ENCODE measurements at regions of chr1 and their contacts with region 1.

Region 1: DNA sequence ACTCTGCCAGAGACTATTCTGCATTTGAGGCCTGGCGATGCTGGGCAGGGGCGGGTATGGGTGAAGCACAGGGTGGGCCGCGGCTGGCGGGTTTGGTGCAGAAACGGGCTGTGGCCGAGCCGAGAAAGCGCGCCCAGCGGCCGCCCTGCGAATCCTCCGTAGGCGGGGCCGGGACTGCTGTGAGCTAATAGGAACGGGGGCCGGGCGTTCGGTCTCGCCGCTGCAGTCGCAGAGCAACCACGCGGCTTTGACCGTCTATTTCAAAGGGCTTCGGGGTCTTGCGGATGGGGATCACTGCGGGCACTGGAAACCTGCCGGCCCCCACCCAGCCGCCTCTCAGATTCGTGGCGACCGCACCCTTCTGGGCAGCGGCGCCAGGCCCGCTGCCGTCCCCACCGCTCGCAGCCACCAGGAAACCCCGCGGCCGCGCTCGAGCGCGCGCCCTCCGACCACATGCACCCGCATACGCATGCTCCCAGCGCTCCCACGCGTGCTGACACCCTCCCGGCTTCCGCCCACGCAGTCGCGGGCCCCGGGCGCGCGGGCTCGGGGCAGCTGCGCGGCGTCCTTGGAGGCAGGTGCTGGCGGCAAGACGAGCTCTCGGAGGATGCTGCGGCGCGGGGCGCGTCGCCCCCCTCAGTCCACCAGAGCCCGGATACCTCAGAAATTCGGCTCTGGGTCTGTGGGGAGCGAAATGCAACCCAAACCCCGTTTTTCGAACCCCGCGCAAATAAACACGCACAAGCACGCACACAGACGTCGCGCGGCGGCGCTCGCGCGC is 32.6 kb downstream of the DNTTIP2 start:
- DNase-seq: peak; percentile 74
- H3K4me3 ChIP-seq: peak overlapping the region; percentile 74 to 97 (median 87)
- H3K27ac ChIP-seq: peak overlapping the region; percentile 83
- H3K4me1 ChIP-seq: peaks cover 39% of the 10 kb centered on the region
- H3K27me3 ChIP-seq: no peaks in the 10 kb centered on the region
- CTCF ChIP-seq: peak in 1 of 2 donors; percentile 42

Region 2: DNA sequence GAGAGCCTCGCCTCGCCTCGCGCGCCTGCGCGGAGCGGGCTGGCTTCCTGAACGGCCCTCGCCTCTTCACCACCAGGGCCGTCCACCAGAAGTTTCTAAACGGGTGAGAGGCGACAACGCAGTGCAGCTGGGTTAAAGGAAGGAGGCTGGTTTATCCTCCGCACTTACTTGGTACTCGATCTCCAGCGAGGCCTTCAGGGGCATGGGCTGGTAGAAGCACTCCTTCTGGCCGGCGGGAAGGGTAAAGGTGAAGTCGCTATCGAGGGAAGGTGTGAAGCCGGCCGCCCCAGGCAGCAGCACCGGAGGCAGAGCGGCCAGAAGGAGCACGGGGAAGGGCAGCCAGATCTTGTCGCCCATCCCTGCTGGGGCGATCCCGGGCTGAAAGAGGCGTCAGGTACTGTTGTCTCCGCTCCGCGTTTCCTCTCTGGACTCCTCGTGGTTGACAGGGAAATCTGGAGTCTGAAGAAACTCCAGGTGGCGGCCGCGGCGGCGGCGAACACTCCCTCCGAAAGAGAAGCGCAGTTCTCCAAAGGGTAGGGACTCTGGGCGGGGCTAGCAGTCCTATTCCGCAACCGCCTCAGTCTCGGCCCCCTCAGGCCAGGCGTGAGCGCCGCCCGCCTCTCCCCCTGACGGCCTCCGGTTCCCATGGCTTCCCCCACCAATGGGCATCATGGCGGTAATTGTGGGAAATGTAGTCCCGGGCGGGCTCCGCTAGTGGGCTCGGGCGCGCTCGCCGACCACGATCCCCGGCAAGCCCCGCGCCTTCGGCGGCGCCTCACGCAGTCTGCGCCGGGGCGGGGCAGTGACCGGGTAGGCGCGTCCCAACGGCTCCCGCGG is 666.3 kb before region 1 on chr1 and contains the start of gene TMED5:
- CTCF ChIA-PET with region 1: no interaction called
- dilution Hi-C with region 1: no loop called
- in situ Hi-C with region 1: no loop called
- intact Hi-C with region 1: loop called (anchors 2 kb)
- DNase-seq: peak; percentile 99
- H3K4me3 ChIP-seq: peak within 1 kb of the TSS; percentile 85 to 100 (median 98)
- H3K27ac ChIP-seq: peak within 1 kb of the TSS; percentile 94
- H3K4me1 ChIP-seq: peaks cover 14% of the 10 kb centered on the region
- H3K27me3 ChIP-seq: no peaks in the 10 kb centered on the region
- CTCF ChIP-seq: peak in 1 of 2 donors; percentile 18
- total RNA-seq, gene TMED5: 50.5 to 61.5 TPM

Region 3: DNA sequence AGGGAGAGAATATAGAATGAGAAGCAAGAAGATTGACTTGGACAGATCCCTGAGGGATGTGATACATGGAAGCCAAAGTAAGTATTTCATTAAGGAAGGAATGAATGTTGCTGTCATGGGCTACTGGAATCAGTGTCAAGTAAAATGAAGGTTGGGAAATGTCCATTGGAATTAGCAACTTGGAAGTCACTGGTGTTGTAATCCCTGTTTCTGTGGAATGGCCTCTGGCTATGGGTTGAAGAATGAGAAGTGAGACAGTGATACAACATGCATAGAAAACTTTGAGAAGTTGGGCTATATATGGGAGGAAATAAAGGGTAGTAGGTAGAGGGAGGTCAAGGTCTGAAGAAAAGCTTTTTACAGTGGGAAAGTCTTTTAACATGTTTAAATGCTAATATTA is 611.1 kb before region 1 on chr1:
- CTCF ChIA-PET with region 1: no interaction called
- dilution Hi-C with region 1: no loop called
- in situ Hi-C with region 1: no loop called
- intact Hi-C with region 1: no loop called
- DNase-seq: no peak
- H3K4me3 ChIP-seq: no peak overlapping the region
- H3K27ac ChIP-seq: no peak overlapping the region
- H3K4me1 ChIP-seq: no peaks in the 10 kb centered on the region
- H3K27me3 ChIP-seq: no peaks in the 10 kb centered on the region
- CTCF ChIP-seq: no peak

Region 4: DNA sequence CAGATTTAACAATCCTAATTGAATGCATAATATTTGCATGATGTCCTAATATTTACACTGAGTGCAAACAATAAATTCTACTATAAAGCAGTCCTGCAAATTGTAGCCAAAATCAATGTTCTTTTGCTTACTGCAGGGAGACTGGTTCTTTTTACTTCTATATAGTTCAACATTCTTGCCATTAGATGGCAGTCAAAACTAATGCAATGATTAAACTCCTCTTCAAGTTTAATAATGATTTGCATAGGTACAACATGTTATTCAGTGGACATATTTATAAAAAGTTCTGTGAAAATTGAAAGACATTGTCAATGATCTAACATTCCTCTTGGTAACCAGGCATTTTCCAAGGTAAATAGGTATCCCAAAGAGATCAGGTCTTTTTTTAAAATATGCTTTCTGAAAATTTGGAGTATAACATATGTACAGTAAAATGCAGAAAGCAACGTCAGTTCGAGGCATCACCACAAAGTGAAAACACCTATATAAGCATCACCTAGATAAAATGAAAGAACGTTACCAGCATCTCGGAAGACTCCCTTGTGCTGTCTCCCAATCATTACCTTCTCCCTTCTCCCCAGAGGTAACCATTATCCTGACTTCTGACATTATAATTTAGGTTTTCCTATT is 408.3 kb before region 1 on chr1:
- CTCF ChIA-PET with region 1: interaction called, 3 read pairs
- dilution Hi-C with region 1: no loop called
- in situ Hi-C with region 1: loop called in 1 of 2 experiments (anchors 10 kb)
- intact Hi-C with region 1: loop called (anchors 1 kb)
- DNase-seq: peak; percentile 39
- H3K4me3 ChIP-seq: no peak overlapping the region
- H3K27ac ChIP-seq: no peak overlapping the region
- H3K4me1 ChIP-seq: peaks cover 5% of the 10 kb centered on the region
- H3K27me3 ChIP-seq: no peaks in the 10 kb centered on the region
- CTCF ChIP-seq: peak; percentile 52 to 63

Region 5: GRCh38 chr1:93573940-93574469 is 272.4 kb before region 1 on chr1:
- CTCF ChIA-PET with region 1: no interaction called
- dilution Hi-C with region 1: no loop called
- in situ Hi-C with region 1: no loop called
- intact Hi-C with region 1: loop called (anchors 5 kb)
- DNase-seq: no peak
- H3K4me3 ChIP-seq: no peak overlapping the region
- H3K27ac ChIP-seq: no peak overlapping the region
- H3K4me1 ChIP-seq: peaks cover 35% of the 10 kb centered on the region
- H3K27me3 ChIP-seq: no peaks in the 10 kb centered on the region
- CTCF ChIP-seq: no peak

Region 6: GRCh38 chr1:93680757-93681550 is 165.4 kb before region 1 on chr1:
- CTCF ChIA-PET with region 1: no interaction called
- dilution Hi-C with region 1: no loop called
- in situ Hi-C with region 1: no loop called
- intact Hi-C with region 1: loop called (anchors 1 kb)
- DNase-seq: peak; percentile 84
- H3K4me3 ChIP-seq: peak overlapping the region; percentile 59 to 94 (median 84)
- H3K27ac ChIP-seq: peak overlapping the region; percentile 85
- H3K4me1 ChIP-seq: peaks cover 42% of the 10 kb centered on the region
- H3K27me3 ChIP-seq: no peaks in the 10 kb centered on the region
- CTCF ChIP-seq: peak; percentile 60 to 72

Region 7: DNA sequence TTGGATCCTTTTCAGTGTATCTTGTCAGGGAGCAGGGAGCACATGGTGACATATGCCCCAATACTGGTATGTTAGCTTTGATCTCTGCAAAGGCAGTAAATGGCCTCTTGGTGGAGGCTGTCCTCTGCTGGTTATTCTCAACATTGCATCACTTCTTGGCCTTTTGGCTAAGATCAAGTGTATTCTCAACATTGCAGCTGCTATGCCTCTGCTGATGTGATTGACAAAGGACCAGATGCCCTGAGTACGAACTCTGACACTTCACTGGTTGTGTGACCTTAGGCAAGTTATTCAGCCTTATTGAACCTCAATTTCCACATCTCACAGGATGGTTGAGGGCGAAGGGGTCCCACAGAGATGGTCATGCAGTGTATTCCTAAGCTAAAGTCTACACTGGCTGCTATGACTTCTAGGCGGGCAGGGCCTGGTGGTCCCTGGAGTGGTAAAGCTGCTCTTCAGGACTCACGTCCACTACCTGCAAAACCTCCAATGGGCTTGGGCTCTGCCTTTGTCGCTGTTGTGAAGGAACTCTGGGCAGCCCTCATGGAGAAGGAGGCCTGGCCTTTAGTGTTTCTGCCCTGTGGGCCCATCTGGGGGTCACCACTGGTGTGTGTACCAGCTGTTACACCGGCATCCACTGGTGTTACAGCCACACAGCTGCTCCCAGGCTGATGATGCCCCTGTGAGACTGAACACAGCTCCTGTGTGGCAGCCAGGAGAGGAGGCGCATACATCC is 32.2 kb before region 1 on chr1:
- CTCF ChIA-PET with region 1: interaction called, 12 read pairs
- dilution Hi-C with region 1: no loop called
- in situ Hi-C with region 1: no loop called
- intact Hi-C with region 1: loop called (anchors 1 kb)
- DNase-seq: peak; percentile 78
- H3K4me3 ChIP-seq: no peak overlapping the region
- H3K27ac ChIP-seq: peak overlapping the region; percentile 76
- H3K4me1 ChIP-seq: peaks cover 75% of the 10 kb centered on the region
- H3K27me3 ChIP-seq: no peaks in the 10 kb centered on the region
- CTCF ChIP-seq: peak; percentile 100

Measured in mammary epithelial cell (primary cell).